Ovary (tissue), 10 donors: ENCODE measurements at regions of chr7 and their contacts with region 1.

Region 1: DNA sequence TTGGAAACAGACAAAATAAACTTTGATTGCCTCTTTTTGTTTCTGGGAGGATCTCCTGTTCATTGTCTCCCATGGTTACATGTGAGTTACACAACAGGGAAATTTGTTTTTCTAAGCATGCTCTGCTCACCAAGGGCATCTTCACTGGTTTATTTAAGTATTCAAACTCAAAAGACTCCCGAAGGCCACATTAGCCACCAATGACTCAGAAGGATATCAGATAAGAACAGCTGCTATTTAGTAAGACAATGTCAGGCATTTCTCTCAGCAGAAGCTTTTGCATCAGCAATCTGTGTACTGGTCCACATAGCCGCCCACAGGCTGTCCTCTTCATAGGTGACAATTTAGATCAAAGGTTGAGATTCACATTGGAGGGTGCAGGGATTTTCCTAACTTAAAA is 19.3 kb downstream of the OR6B1 start:
- DNase-seq: peak in 1 of 5 donors; percentile 47
- H3K4me3 ChIP-seq: no peak overlapping the region
- H3K27ac ChIP-seq: peak overlapping the region in 1 of 2 donors; percentile 50
- H3K4me1 ChIP-seq: no peaks in the 10 kb centered on the region
- H3K27me3 ChIP-seq: no peaks in the 10 kb centered on the region
- CTCF ChIP-seq: no peak
- EP300 ChIP-seq: no peak
- POLR2A ChIP-seq: no peak

Region 2: DNA sequence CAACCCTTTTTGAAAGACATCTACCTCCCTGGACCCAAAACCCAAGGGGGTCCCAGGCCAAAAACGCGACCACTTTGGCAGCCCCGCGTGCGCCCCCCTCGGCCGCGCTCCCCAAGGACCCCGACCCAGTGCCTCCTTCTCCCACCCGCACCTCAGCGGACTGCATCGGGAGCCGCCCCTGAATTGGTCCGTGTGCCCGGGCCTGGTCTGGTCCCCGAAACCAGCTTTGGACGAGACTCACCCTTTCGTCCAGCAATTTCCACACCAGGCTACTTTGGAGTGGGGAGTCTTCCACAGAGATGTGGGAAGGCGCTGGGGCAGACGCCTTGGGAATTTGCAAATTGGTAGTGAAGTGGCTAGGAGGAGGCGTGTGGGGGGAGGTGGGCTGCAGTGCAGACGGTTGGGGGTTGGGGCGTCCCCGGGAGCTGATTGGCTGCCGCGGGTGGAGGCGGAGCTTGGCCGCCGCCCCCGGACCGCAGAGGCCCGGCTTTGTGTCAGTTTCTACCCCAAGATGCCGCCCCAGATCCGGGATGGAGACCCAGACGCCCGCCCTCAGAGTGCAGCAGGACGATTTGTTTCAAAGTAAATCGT is 134.4 kb before region 1 on chr7:
- intact Hi-C with region 1: loop called in 1 of 4 experiments (anchors 10 kb)
- DNase-seq: peak; percentile 72 to 89 (median 83)
- H3K4me3 ChIP-seq: peak overlapping the region; percentile 32
- H3K27ac ChIP-seq: peak overlapping the region; percentile 36 to 55
- H3K4me1 ChIP-seq: peaks cover 5% of the 10 kb centered on the region
- H3K27me3 ChIP-seq: no peaks in the 10 kb centered on the region
- CTCF ChIP-seq: no peak
- EP300 ChIP-seq: no peak
- POLR2A ChIP-seq: no peak